ENCODE measurements at regions of chr6 and their contacts with region 1.

Region 1: DNA sequence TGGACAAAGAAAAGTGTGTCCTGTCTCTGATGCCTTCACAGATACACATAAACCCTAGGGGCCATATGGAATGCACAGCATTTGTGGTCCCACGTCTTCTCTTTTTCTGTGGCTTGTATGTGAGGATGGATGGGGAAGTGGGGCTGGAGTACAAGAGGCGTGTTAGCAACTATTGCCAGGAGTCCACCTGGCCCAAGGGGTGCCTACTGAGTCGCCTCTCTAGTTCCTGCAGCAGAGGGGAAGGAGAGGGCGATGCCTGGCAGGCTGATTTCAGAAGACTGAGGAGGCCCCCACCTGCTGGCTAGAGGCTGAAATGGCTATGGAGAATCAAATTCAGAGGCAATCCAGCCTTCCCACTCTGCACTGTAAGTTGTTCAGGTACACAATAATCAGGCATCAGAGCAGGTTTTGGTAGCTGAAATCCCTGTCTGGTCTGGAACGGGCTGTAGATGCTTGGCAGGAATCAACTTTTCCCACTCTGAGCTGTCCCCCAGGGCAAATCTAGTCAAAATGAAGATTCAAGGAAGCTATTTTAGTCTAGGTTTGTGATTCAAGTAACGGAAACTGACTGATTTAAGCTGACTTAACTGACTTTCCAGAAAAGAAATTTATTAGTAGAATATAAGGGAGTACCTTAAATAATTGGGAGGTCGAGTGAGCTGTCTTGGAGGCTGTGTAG is 14.9 kb upstream of the PPARD start:
- DNase-seq: no peak
- ATAC-seq: peak; percentile 99
- H3K4me3 ChIP-seq: no peak overlapping the region
- H3K27ac ChIP-seq: no peak overlapping the region
- H3K4me1 ChIP-seq: no peaks in the 10 kb centered on the region
- H3K27me3 ChIP-seq: no peaks in the 10 kb centered on the region
- CTCF ChIP-seq: peak; percentile 73 to 90 (median 86)
- EP300 ChIP-seq: no peak
- POLR2A ChIP-seq: no peak
- RAD21 ChIP-seq: peak; percentile 73

Region 2: DNA sequence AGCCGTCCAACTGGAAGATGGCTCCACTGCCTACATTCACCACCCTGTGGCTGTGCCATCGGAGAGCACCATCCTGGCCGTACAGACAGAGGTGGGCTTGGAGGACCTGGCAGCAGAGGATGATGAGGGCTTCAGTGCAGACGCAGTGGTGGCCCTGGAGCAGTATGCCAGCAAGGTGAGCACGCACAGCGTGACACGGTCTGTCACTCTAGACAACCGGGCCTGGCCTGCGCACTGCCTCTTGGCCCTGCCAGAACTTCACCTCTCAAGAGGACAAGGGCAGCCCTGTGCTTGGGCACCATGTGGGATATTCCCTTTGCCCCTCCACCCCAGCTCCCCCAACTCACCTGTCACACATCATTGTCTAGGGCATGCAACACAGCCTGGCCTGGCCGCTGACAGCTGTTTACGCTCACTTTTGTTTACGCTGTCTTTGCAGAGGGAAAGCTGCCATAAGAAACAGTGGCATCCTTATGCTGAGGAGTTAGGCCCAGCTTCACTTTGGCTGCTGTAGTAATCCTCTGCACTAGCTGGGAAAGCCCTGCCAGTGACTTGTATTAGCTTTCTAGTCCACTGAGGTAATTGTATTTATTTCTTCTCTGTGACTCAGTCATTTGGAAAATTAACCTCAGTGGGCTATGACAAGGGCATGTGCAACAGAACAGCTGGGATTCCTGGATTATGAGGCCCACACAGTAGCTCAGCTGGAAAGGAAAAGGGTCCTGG is 39.7 kb before region 1 on chr6:
- CTCF ChIA-PET with region 1: interaction called, 19 read pairs
- POLR2A ChIA-PET with region 1: no interaction called
- RAD21 ChIA-PET with region 1: interaction called, 3 read pairs
- SMC1A ChIA-PET with region 1: interaction called, 3 read pairs
- in situ Hi-C with region 1: no loop called
- intact Hi-C with region 1: no loop called
- DNase-seq: no peak
- ATAC-seq: no peak
- H3K4me3 ChIP-seq: no peak overlapping the region
- H3K27ac ChIP-seq: no peak overlapping the region
- H3K4me1 ChIP-seq: no peaks in the 10 kb centered on the region
- H3K27me3 ChIP-seq: no peaks in the 10 kb centered on the region
- CTCF ChIP-seq: no peak
- EP300 ChIP-seq: no peak
- POLR2A ChIP-seq: no peak
- RAD21 ChIP-seq: no peak

Region 3: DNA sequence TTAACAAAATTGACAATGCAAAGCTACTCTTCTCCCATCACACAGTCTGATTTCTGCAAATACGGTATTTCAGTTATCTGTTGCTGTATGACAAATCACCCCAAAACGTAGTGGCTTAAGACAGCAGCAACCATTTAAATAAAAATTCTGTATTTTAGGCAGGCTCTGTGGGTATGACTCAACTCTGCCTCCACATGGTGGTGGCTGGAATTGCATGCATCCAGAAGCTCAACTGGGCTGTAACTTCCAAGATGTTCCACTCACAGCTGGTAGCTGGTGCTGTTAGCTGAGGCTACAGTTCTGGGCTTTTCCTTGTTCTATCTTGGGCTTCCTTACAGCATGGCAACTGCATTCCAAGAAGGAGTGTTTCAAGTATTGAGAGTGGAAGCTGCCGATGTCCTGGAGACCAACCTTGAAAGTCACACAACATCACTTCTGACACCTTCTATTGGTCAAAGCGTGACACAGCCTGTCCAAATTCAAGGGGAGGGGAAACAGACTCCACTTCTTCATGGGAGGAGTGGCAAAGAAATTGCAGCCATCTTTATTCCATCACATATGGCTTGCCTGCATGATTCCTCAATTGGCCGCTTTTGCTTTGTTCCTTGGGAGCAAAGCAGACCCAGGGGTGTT is 224.9 kb after region 1 on chr6:
- CTCF ChIA-PET with region 1: interaction called, 3 read pairs
- POLR2A ChIA-PET with region 1: interaction called, 10 read pairs
- RAD21 ChIA-PET with region 1: no interaction called
- SMC1A ChIA-PET with region 1: no interaction called
- in situ Hi-C with region 1: no loop called
- intact Hi-C with region 1: no loop called
- DNase-seq: peak; percentile 15
- ATAC-seq: peak; percentile 43; the same call in 2 of the 3 replicates
- H3K4me3 ChIP-seq: no peak overlapping the region
- H3K27ac ChIP-seq: no peak overlapping the region
- H3K4me1 ChIP-seq: no peaks in the 10 kb centered on the region
- H3K27me3 ChIP-seq: no peaks in the 10 kb centered on the region
- CTCF ChIP-seq: peak; percentile 40 to 90 (median 83)
- EP300 ChIP-seq: no peak
- POLR2A ChIP-seq: no peak
- RAD21 ChIP-seq: peak; percentile 39; the same call in 1 of the 2 replicates

Measured in GM12878 (cell line).